AG04450 (cell line): ENCODE measurements at regions of chrX and their contacts with region 1.

Region 1: GRCh38 chrX:65702956-65703355 is 35.5 kb downstream of the MSN start:
- DNase-seq: no peak
- H3K4me3 ChIP-seq: no peak overlapping the region
- H3K27ac ChIP-seq: no peak overlapping the region
- H3K27me3 ChIP-seq: no peaks in the 10 kb centered on the region
- CTCF ChIP-seq: no peak

Region 2: GRCh38 chrX:65595460-65595876 is 107.5 kb before region 1 on chrX:
- CTCF ChIA-PET with region 1: interaction called, 12 read pairs
- POLR2A ChIA-PET with region 1: no interaction called
- DNase-seq: peak; percentile 83
- H3K4me3 ChIP-seq: no peak overlapping the region
- H3K27ac ChIP-seq: peak overlapping the region; percentile 68
- H3K27me3 ChIP-seq: no peaks in the 10 kb centered on the region
- CTCF ChIP-seq: peak; percentile 98